H1 (cell line): ENCODE measurements at regions of chr12 and their contacts with region 1.

Region 1: GRCh38 chr12:132614861-132615578 is 3.6 kb upstream of the P2RX2 start:
- DNase-seq: peak; percentile 58 to 89
- H3K4me3 ChIP-seq: no peak overlapping the region
- H3K27ac ChIP-seq: no peak overlapping the region
- H3K4me1 ChIP-seq: peaks cover 0 to 3% (median 0%) of the 10 kb centered on the region in 4 experiments; a peak in 2 of 7 replicates
- H3K27me3 ChIP-seq: peaks cover 35 to 82% (median 65%) of the 10 kb centered on the region in 4 experiments
- CTCF ChIP-seq: peak; percentile 90 to 96 (median 95)
- EP300 ChIP-seq: no peak
- POLR2A ChIP-seq: no peak
- RAD21 ChIP-seq: peak; percentile 88 to 94

Region 2: GRCh38 chr12:132582058-132582420 is 33.0 kb before region 1 on chr12:
- CTCF ChIA-PET with region 1: interaction called, 4 read pairs
- POLR2A ChIA-PET with region 1: interaction called, 28 read pairs
- DNase-seq: peak in 1 of 2 experiments; percentile 84
- H3K4me3 ChIP-seq: peak overlapping the region in 3 of 4 experiments; percentile 10 to 59 (median 15); a peak in 6 of 8 replicates
- H3K27ac ChIP-seq: no peak overlapping the region
- H3K4me1 ChIP-seq: peaks cover 0 to 6% (median 5%) of the 10 kb centered on the region in 4 experiments; a peak in 2 of 7 replicates
- H3K27me3 ChIP-seq: peaks cover 21 to 48% (median 39%) of the 10 kb centered on the region in 4 experiments
- CTCF ChIP-seq: no peak
- EP300 ChIP-seq: no peak
- POLR2A ChIP-seq: no peak
- RAD21 ChIP-seq: no peak

Region 3: DNA sequence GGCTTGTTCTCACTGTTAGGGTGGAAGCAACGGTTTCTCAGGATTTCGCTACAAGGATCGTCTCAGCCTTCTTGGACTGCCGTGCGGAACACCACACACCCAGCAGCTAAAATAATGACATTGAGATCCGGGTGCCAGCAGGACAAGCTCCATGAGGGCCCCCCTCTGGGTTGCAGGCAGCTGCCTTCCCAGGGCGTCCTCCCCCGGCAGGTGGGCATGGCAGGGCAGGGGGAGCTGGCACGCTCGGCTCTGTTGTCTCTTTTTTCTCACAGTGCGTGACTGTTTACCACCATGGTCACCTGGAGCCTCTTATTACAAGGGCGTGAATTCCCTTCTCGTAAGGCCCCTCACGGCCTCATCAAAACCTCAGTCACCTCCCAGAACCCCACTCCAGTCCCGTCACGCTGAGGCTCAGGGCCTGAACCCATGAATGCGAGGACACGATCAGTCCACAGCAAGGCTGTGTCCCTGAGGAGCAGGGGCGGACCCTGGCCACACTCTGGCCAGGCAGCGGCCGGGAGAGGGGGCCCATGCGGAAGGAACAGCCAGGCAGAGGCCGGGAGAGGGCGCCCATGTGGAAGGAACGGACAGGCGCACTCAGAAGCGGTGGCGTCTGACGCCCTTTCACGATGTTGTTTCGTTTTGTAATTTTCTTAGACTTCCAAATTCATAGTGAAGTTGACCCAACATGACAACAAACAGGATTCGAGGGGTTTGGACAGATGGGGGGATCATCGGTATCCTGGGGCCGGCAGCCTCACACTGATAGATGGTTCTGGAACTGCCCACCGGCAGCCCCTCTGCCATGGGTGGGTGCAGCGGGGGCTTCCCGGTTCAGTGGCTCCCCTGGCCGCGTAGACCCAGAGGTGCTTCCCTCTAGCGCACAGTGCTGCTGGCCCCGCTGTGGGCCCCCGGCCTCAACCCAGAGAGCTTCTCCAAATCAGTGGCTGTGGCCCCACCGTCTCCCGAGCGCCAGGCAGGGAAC is 14.7 kb before region 1 on chr12:
- CTCF ChIA-PET with region 1: interaction called, 43 read pairs
- POLR2A ChIA-PET with region 1: interaction called, 15 read pairs
- DNase-seq: peak in 1 of 2 experiments; percentile 81
- H3K4me3 ChIP-seq: peak overlapping the region in 1 of 4 experiments; percentile 23; a peak in 1 of 8 replicates
- H3K27ac ChIP-seq: no peak overlapping the region
- H3K4me1 ChIP-seq: peaks cover 0 to 6% (median 2%) of the 10 kb centered on the region in 4 experiments; a peak in 4 of 7 replicates
- H3K27me3 ChIP-seq: peaks cover 12 to 65% (median 55%) of the 10 kb centered on the region in 4 experiments
- CTCF ChIP-seq: peak in 2 of 3 experiments; percentile 81 to 92; a peak in 3 of 4 replicates
- EP300 ChIP-seq: no peak
- POLR2A ChIP-seq: no peak
- RAD21 ChIP-seq: peak; percentile 74 to 83

Region 4: GRCh38 chr12:132632501-132633228 is 17.6 kb after region 1 on chr12:
- CTCF ChIA-PET with region 1: interaction called, 28 read pairs
- POLR2A ChIA-PET with region 1: interaction called, 26 read pairs
- DNase-seq: no peak
- H3K4me3 ChIP-seq: no peak overlapping the region
- H3K27ac ChIP-seq: no peak overlapping the region
- H3K4me1 ChIP-seq: no peaks in the 10 kb centered on the region
- H3K27me3 ChIP-seq: no peaks in the 10 kb centered on the region
- CTCF ChIP-seq: no peak
- EP300 ChIP-seq: no peak
- POLR2A ChIP-seq: no peak
- RAD21 ChIP-seq: no peak

Region 5: GRCh38 chr12:132638541-132639418 is 23.8 kb after region 1 on chr12:
- CTCF ChIA-PET with region 1: interaction called, 28 read pairs
- POLR2A ChIA-PET with region 1: interaction called, 4 read pairs
- DNase-seq: peak in 1 of 2 experiments; percentile 60
- H3K4me3 ChIP-seq: no peak overlapping the region
- H3K27ac ChIP-seq: no peak overlapping the region
- H3K4me1 ChIP-seq: no peaks in the 10 kb centered on the region
- H3K27me3 ChIP-seq: no peaks in the 10 kb centered on the region
- CTCF ChIP-seq: peak in 2 of 3 experiments; percentile 48 to 90; a peak in 3 of 4 replicates
- EP300 ChIP-seq: no peak
- POLR2A ChIP-seq: no peak
- RAD21 ChIP-seq: peak in 1 of 2 experiments; percentile 38; a peak in 2 of 4 replicates